GM12878 (cell line): ENCODE measurements at regions of chr1 and their contacts with region 1.

Region 1: DNA sequence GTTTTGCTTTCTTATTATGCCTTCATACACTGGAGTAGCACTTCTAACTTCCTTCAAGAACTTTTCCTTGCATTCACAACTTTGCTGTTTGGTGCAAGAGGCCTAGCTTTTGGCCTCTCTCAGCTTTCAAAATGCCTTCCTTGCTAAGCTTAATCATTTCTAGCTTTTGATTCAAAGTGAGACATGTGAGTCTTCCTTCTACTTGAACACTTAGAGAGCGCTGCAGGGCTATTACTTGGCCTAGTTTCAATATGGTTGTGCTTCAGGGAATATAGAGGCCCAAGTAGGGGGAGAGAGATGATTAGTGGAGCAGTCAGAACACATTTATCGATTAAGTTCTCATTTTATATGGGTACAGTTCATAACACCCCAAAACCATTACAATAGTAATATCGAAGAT is 12.4 kb downstream of the ANGEL2 start:
- DNase-seq: no peak
- ATAC-seq: peak; percentile 88
- H3K4me3 ChIP-seq: no peak overlapping the region
- H3K27ac ChIP-seq: peak overlapping the region; percentile 22; the same call in 1 of the 2 replicates
- H3K4me1 ChIP-seq: no peaks in the 10 kb centered on the region
- H3K27me3 ChIP-seq: no peaks in the 10 kb centered on the region
- CTCF ChIP-seq: no peak
- EP300 ChIP-seq: no peak
- POLR2A ChIP-seq: no peak
- RAD21 ChIP-seq: no peak

Region 2: DNA sequence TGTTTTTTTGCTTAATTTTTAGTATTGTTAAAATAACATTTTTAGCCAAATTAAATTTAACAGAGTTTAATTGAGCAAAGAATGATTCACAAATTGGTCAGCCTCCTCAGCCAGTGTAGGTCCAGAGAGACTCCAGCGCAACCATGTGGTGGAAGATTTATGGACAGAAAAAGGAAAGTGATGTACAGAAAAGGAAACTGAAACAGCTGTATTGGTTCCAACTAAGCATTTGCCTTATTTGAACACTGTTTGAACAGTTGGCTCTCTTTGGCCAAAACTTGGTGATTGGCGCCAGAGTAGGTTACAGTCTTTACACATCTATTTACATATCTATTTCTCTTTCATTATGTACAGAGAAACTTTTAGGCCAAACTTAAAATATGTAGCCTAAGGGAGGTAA is 67.2 kb after region 1 on chr1:
- CTCF ChIA-PET with region 1: interaction called, 18 read pairs
- POLR2A ChIA-PET with region 1: no interaction called
- RAD21 ChIA-PET with region 1: interaction called, 5 read pairs
- SMC1A ChIA-PET with region 1: interaction called, 9 read pairs
- in situ Hi-C with region 1: no loop called
- intact Hi-C with region 1: no loop called
- DNase-seq: peak; percentile 84
- ATAC-seq: peak; percentile 92
- H3K4me3 ChIP-seq: 0 out of 2 replicates have a peak overlapping the region, but pooled peaks have one; percentile 6
- H3K27ac ChIP-seq: peak overlapping the region; percentile 73
- H3K4me1 ChIP-seq: peaks cover 10% of the 10 kb centered on the region
- H3K27me3 ChIP-seq: no peaks in the 10 kb centered on the region
- CTCF ChIP-seq: peak; percentile 33 to 47 (median 34); a peak in 4 of 6 replicates
- EP300 ChIP-seq: no peak
- POLR2A ChIP-seq: no peak
- RAD21 ChIP-seq: peak; percentile 72